ENCODE measurements at regions of chr12 and their contacts with region 1.

Region 1: GRCh38 chr12:42482445-42483237 is 106.9 kb downstream of the PRICKLE1 start:
- DNase-seq: peak; percentile 53 to 73 (median 71)
- H3K4me3 ChIP-seq: peak overlapping the region; percentile 45 to 89 (median 75)
- H3K27ac ChIP-seq: no peak overlapping the region
- H3K4me1 ChIP-seq: peaks cover 5 to 21% (median 19%) of the 10 kb centered on the region in 4 experiments
- H3K27me3 ChIP-seq: peaks cover 9 to 36% (median 18%) of the 10 kb centered on the region in 5 experiments

Region 2: GRCh38 chr12:42213023-42213422 is 269.6 kb before region 1 on chr12:
- CTCF ChIA-PET with region 1: no interaction called
- POLR2A ChIA-PET with region 1: no interaction called
- DNase-seq: peak in 2 of 3 donors; percentile 22 to 46
- H3K4me3 ChIP-seq: no peak overlapping the region
- H3K27ac ChIP-seq: no peak overlapping the region
- H3K4me1 ChIP-seq: peaks cover 0 to 9% (median 1%) of the 10 kb centered on the region in 4 experiments
- H3K27me3 ChIP-seq: no peaks in the 10 kb centered on the region

Region 3: DNA sequence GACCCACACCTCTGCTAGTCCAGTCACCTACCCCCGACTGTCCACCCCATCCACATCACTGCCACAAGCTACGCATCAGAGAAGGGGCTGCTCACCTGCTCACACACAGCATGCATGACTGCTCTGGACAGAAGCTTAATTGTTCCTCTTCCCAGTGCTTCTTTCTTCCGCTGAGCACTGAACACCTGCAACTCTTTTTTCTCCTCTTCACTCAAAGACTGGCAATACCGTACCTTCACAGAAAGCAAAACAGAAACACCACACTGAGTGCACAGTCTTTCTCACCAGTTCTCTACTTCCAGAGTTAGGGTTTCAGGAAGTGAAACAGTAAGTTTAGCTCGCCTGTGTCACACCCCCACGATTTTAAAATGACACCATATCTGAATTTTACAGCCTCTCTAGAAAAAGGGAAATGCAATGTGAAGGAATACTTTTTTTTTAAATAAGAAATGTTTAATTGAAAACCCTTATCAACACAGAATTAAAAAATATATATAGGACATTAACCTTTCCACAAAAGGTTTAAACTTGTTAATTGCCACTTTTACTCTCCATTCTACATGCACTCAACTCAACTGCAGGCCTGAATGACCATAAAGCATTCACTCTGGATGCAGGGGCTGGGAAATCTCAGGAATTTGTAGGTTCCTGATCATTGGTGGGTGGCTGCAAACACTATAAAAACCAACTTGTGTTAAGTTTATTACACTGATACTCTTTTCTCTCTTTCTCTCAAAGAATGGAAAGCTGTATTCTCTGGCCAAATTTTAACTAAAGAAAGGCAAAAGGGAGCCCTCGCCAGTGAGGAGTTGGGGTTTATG is 13.1 kb before region 1 on chr12:
- CTCF ChIA-PET with region 1: interaction called, 19 read pairs
- POLR2A ChIA-PET with region 1: no interaction called
- DNase-seq: peak; percentile 47 to 86 (median 79)
- H3K4me3 ChIP-seq: peak overlapping the region; percentile 26 to 82 (median 61)
- H3K27ac ChIP-seq: no peak overlapping the region
- H3K4me1 ChIP-seq: peaks cover 20 to 30% (median 26%) of the 10 kb centered on the region in 4 experiments
- H3K27me3 ChIP-seq: no peaks in the 10 kb centered on the region

Region 4: GRCh38 chr12:42568952-42569915 is 86.6 kb after region 1 on chr12:
- CTCF ChIA-PET with region 1: interaction called, 10 read pairs
- POLR2A ChIA-PET with region 1: no interaction called
- DNase-seq: peak; percentile 54 to 74 (median 72)
- H3K4me3 ChIP-seq: no peak overlapping the region
- H3K27ac ChIP-seq: no peak overlapping the region
- H3K4me1 ChIP-seq: no peaks in the 10 kb centered on the region
- H3K27me3 ChIP-seq: no peaks in the 10 kb centered on the region

Region 5: DNA sequence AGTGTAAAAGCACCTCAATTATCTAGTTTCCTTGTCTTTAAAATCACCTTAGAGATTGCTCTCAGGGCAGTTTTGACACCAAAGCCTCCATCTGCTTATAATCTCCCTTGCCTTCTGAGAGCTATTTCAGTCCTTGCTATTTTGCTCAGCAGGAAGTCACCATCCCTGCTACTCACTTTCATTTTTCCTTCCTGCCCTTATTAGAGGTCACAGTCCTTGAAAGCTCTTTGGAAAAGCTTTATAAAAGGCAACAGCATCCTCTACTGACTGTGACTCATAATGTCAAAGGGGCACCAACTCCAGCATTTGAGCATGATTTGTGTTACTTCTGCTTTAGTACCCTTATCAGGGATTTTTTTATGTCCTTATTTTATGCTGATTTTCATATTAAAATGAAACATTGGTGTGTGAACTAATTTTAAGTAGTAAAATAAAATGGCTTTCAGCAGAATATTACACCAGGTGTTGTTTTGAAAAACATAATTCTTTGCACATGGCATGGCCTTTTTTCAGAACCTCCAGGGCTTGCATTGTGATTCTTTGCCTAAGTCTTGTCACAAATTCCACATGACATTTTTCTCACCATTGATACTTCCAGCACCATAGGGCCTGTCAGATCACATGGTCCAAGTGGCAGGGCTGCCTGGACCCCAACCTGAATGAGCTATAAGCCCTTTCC is 856.3 kb after region 1 on chr12:
- CTCF ChIA-PET with region 1: interaction called, 12 read pairs
- POLR2A ChIA-PET with region 1: no interaction called
- DNase-seq: peak; percentile 37 to 76 (median 68)
- H3K4me3 ChIP-seq: no peak overlapping the region
- H3K27ac ChIP-seq: no peak overlapping the region
- H3K4me1 ChIP-seq: peaks cover 0 to 8% (median 3%) of the 10 kb centered on the region in 4 experiments
- H3K27me3 ChIP-seq: no peaks in the 10 kb centered on the region

Measured in common myeloid progenitor, CD34-positive (primary cell).